Psoas muscle (tissue), 8 donors: ENCODE measurements at regions of chr19 and their contacts with region 1.

Region 1: DNA sequence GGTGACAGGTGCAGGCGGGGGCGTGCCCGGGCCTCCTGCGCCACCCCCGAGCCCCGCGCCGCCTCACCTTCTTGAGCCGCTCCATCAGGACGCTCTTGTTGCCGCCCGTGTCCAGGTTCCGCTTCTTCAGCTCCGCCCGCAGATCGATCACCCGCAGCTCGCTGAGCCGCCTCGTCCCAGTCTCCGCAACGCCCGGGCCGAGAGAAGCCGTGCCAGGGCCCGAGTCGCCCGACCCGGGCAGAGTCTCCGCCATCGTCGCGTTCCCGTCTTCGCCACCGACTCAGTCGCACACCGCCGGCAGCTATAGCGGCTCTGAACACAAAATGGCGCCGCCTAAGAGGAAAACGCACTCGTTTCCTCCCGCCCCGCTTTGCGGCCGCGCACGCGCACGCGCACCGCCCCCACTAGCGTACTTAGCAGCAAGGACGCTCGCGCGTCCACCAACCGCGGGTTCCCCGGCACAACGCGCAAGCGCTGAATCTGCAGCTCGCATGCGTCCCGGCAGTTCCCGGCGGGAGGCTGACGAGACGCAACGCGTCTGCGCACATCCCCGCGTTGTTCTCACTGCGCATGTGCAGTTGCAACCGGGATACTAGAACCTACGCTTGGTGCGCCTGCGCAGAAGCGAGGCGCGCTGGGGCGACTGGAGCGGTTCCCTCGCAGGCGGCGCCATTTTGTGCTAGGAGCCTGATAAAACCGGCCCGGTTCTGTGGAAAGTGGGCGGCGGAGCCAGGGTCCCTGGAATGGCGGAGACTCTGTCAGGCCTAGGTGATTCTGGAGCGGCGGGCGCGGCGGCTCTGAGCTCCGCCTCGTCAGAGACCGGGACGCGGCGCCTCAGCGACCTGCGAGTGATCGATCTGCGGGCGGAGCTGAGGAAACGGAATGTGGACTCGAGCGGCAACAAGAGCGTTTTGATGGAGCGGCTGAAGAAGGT is at the starts of genes SAFB and SAFB2:
- DNase-seq: peak; percentile 99 to 100
- ATAC-seq: peak; percentile 94 to 96 (median 96)
- H3K4me3 ChIP-seq: peak within 1 kb of the TSS; percentile 98
- H3K27ac ChIP-seq: peak within 1 kb of the TSS; percentile 89
- H3K4me1 ChIP-seq: peaks cover 73% of the 10 kb centered on the region
- H3K27me3 ChIP-seq: no peaks in the 10 kb centered on the region
- CTCF ChIP-seq: no peak
- total RNA-seq, gene SAFB: 51.3 to 88.9 (median 65.1) TPM
- total RNA-seq, gene SAFB2: 30.4 to 52.9 (median 45.6) TPM

Region 2: GRCh38 chr19:5607318-5608270 is 15.1 kb before region 1 on chr19:
- intact Hi-C with region 1: no loop called
- DNase-seq: peak in 1 of 2 donors; percentile 27
- ATAC-seq: peak; percentile 71 to 75 (median 72)
- H3K4me3 ChIP-seq: no peak overlapping the region
- H3K27ac ChIP-seq: peak overlapping the region; percentile 36
- H3K4me1 ChIP-seq: no peaks in the 10 kb centered on the region
- H3K27me3 ChIP-seq: no peaks in the 10 kb centered on the region
- CTCF ChIP-seq: no peak

Region 3: GRCh38 chr19:5661451-5661873 is 38.7 kb after region 1 on chr19:
- intact Hi-C with region 1: loop called in 1 of 2 experiments (anchors 5 kb)
- DNase-seq: no peak
- ATAC-seq: no peak
- H3K4me3 ChIP-seq: no peak overlapping the region
- H3K27ac ChIP-seq: no peak overlapping the region
- H3K4me1 ChIP-seq: peaks cover 10% of the 10 kb centered on the region
- H3K27me3 ChIP-seq: no peaks in the 10 kb centered on the region
- CTCF ChIP-seq: no peak

Region 4: DNA sequence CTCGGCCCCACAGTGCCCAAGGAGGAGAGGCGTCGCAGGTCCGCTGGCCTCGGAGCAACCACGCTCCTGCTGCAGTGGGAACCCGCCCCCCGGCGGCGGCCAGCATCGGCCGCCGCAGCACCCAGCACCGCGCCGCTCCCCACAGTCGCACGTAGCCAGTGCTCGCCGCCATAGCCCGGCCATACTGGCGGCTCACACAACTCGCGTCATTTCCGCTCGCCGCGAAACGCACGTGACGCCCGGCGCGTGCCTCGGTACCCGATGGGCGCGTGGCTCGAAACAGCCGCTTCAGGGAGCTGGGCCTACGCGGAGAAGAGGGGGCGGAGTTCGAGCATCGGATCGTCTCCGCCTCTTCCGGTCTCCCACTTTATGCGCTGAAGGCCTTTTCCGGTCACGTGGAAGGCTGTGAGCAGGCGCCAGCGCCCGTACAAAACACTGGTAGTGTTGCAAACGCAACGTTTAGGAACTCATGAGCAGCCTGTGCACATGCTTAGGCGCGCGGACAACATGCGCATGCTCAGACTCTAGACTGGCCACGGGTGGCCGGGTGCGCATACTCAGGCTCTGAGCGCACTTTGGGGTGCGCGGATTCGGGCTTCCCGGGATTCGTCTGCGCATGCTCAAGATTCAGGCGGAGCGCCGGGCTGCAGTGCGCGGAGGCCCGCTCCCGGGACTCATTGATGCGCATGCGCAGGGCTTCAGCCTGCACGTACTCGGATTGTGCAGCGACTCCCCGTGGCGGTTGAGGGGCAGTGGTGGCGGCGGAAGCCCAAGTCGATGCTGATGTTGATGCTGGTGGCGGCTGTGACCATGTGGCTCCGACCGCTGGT is 97.4 kb after region 1 on chr19 and contains the starts of genes CATSPERD and LONP1:
- intact Hi-C with region 1: loop called in 1 of 2 experiments (anchors 5 kb)
- DNase-seq: peak; percentile 99
- ATAC-seq: peak; percentile 96 to 97 (median 96)
- H3K4me3 ChIP-seq: peak within 1 kb of the TSS; percentile 95
- H3K27ac ChIP-seq: peak within 1 kb of the TSS; percentile 99
- H3K4me1 ChIP-seq: peaks cover 20% of the 10 kb centered on the region
- H3K27me3 ChIP-seq: peaks cover 0 to 3% (median 0%) of the 10 kb centered on the region in 3 donors
- CTCF ChIP-seq: peak; percentile 88
- total RNA-seq, gene CATSPERD: not detected
- total RNA-seq, gene LONP1: 61.0 to 97.1 (median 73.8) TPM